Activated CD8-positive, alpha-beta memory T cell treated with anti-CD3 and anti-CD28 coated beads, Interleukin-2, amount 10 ng/mL, durations not matched to agents 7 days and 5 days (primary cell): ENCODE measurements at regions of chrX and their contacts with region 1.

Region 1: GRCh38 chrX:53714580-53715345 is 28.2 kb upstream of the HUWE1 start:
- DNase-seq: peak; percentile 89
- ATAC-seq: peak; percentile 82
- H3K4me3 Mint-ChIP-seq: peak overlapping the region; percentile 84
- H3K27ac Mint-ChIP-seq: peak overlapping the region; percentile 98
- H3K4me1 Mint-ChIP-seq: peaks cover 51% of the 10 kb centered on the region
- H3K27me3 Mint-ChIP-seq: no peaks in the 10 kb centered on the region

Region 2: DNA sequence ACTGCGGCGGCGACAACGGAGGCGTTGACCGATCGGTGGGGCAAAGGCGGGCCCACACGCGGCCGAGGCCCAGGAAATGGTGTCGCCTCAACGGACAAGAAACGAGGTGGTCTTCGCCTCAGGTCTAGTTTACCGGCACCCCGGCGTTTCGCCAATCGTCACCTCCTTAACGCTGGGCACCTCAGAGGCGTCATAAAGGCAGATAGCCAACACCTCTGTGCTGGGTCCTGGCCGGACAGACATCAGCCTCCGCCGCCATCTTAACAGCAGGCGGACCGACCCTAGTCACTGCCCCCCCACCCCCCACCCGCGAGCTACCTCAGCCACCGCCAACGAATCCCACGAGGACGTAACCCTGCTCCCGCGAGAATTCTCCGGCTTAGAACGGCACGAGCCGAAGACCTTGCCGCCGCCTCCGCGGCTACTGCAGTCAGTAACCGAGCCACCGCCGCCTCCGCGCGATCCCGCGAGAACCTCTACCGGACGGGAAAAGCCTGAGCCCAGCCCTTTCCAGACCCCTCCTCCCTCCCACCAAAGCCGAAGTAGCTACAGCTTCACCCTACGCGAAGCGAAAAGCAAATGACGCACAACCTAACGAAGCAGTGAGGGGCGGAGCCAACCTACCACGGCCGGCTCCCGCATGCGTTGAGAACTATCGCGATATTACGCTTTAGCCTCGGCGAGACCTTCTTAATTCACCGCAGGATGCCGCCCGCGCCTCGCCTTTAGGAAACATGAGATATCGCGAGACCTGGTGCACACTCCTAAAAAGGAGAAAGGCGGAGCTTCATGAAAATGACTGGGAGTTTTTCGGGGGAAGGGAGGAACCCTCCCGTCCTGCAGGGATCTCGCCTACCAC is 31.0 kb before region 1 on chrX:
- CTCF ChIA-PET with region 1: interaction called, 14 read pairs
- DNase-seq: peak; percentile 95
- ATAC-seq: peak; percentile 74
- H3K4me3 Mint-ChIP-seq: peak overlapping the region; percentile 94
- H3K27ac Mint-ChIP-seq: peak overlapping the region; percentile 96
- H3K4me1 Mint-ChIP-seq: peaks cover 32% of the 10 kb centered on the region
- H3K27me3 Mint-ChIP-seq: no peaks in the 10 kb centered on the region

Region 3: DNA sequence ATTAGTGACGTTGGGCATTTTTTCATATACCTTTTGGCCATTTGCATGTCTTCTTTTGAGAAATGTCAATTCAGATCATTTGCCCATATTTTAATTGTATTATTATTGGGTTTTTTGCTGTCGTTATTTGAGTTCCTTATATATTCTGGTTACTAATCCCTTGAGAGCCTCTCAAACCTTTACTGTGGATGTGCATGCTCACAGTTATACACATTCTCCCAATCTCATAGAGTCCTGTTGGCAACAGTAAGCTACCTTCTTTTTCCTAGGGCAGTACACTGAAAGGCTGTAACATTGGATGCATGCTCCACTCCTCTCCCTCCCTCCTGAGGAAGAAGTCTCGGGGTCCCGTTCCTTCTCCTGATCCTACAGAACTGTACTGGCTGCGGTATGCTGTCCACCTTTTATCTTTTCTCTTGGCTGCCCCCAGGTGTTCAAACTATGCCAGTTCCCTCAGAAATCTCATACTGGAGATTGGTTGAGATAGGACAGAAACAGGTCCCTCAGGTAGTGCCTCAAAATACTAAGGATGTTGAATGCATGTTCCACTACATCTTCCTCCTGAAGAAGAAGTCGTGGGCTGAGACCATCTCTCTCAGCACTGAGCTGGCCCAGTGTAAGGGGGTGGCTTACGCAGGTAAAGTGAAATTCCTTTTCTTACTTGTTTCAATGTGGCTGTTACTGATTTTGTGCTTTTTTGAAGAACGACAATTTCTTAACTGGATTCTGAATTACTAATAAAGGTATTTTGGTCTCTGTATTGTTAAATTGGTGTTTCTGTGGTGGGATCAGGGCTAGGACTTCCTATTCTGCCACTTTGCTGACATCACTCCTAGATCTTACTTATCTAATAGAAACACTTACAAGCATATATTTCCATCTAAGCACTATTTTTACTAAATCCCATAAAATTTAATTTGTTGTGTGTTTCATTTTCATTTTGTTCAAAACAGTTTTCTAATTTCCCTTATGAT is 117.2 kb after region 1 on chrX:
- CTCF ChIA-PET with region 1: no interaction called
- DNase-seq: peak; percentile 66
- ATAC-seq: peak; percentile 93
- H3K4me3 Mint-ChIP-seq: peak overlapping the region; percentile 9
- H3K27ac Mint-ChIP-seq: no peak overlapping the region
- H3K4me1 Mint-ChIP-seq: peaks cover 13% of the 10 kb centered on the region
- H3K27me3 Mint-ChIP-seq: no peaks in the 10 kb centered on the region

Region 4: GRCh38 chrX:54024350-54024749 is 309.6 kb after region 1 on chrX:
- CTCF ChIA-PET with region 1: no interaction called
- DNase-seq: no peak
- ATAC-seq: no peak
- H3K4me3 Mint-ChIP-seq: no peak overlapping the region
- H3K27ac Mint-ChIP-seq: no peak overlapping the region
- H3K4me1 Mint-ChIP-seq: peaks cover 3% of the 10 kb centered on the region
- H3K27me3 Mint-ChIP-seq: no peaks in the 10 kb centered on the region